GM12878 (cell line): ENCODE measurements at regions of chrX and their contacts with region 1.

Region 1: GRCh38 chrX:109485470-109486340 is 3.8 kb upstream of the GUCY2F start:
- DNase-seq: peak; percentile 34
- ATAC-seq: peak; percentile 84
- H3K4me3 ChIP-seq: no peak overlapping the region
- H3K27ac ChIP-seq: no peak overlapping the region
- H3K4me1 ChIP-seq: no peaks in the 10 kb centered on the region
- H3K27me3 ChIP-seq: no peaks in the 10 kb centered on the region
- CTCF ChIP-seq: peak; percentile 93 to 99 (median 99); a peak in 5 of 6 replicates
- EP300 ChIP-seq: no peak
- POLR2A ChIP-seq: no peak
- RAD21 ChIP-seq: peak; percentile 91

Region 2: GRCh38 chrX:109475174-109475891 is 10.4 kb before region 1 on chrX:
- CTCF ChIA-PET with region 1: interaction called, 28 read pairs
- POLR2A ChIA-PET with region 1: no interaction called
- RAD21 ChIA-PET with region 1: interaction called, 4 read pairs
- SMC1A ChIA-PET with region 1: interaction called, 3 read pairs
- in situ Hi-C with region 1: no loop called
- intact Hi-C with region 1: no loop called
- DNase-seq: no peak
- ATAC-seq: peak; percentile 61
- H3K4me3 ChIP-seq: no peak overlapping the region
- H3K27ac ChIP-seq: no peak overlapping the region
- H3K4me1 ChIP-seq: no peaks in the 10 kb centered on the region
- H3K27me3 ChIP-seq: no peaks in the 10 kb centered on the region; a peak in 1 of 4 replicates
- CTCF ChIP-seq: peak in 2 of 3 experiments; percentile 13 to 19; a peak in 2 of 6 replicates
- EP300 ChIP-seq: no peak
- POLR2A ChIP-seq: no peak
- RAD21 ChIP-seq: 0 out of 2 replicates have a peak, but pooled peaks have one; percentile 22

Region 3: DNA sequence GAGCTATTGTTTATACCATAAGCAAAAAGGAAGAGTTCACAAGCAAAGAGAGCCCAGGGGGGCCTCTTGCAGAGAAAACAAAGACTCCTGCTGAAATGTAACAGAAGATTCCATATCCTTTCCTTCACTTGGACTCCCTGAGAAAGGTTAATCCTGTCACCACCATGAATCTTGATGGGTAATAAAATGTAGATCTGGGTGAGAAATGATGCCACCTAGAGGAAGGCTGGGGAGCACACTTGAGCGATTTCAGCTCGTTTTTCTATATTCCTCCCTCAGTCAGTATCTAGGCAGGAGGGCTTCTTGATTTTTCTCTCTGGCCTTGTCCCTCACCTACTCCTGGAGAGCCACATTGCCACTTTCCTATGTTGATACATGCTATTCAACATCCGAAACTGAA is 149.5 kb after region 1 on chrX:
- CTCF ChIA-PET with region 1: interaction called, 94 read pairs
- POLR2A ChIA-PET with region 1: interaction called, 3 read pairs
- RAD21 ChIA-PET with region 1: interaction called, 6 read pairs
- SMC1A ChIA-PET with region 1: interaction called, 37 read pairs
- in situ Hi-C with region 1: loop called (anchors 5 kb)
- intact Hi-C with region 1: loop called (anchors 1 kb)
- DNase-seq: no peak
- ATAC-seq: peak; percentile 86
- H3K4me3 ChIP-seq: no peak overlapping the region
- H3K27ac ChIP-seq: no peak overlapping the region
- H3K4me1 ChIP-seq: no peaks in the 10 kb centered on the region
- H3K27me3 ChIP-seq: no peaks in the 10 kb centered on the region
- CTCF ChIP-seq: peak; percentile 44 to 69 (median 50); a peak in 4 of 6 replicates
- EP300 ChIP-seq: no peak
- POLR2A ChIP-seq: no peak
- RAD21 ChIP-seq: peak; percentile 26

Region 4: DNA sequence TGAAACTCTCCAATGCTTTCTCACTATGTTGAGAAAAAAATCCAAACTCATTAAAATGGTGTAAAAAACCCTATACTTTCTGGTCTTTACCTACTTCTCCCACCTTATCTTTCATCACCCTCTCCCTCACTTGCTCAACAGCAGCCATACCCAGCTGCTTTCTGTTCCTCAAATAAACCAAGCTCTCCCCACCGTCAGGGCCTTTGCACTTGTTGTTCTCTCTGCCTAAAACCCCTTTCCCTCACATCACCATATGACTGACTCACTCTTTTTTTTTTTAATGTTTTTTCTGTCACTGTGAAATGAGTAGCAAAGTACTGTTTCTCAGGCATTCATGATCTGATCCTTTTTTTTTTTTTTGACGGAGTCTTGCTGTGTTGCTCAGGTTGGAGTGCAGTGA is 394.9 kb after region 1 on chrX:
- CTCF ChIA-PET with region 1: interaction called, 11 read pairs
- POLR2A ChIA-PET with region 1: no interaction called
- RAD21 ChIA-PET with region 1: no interaction called
- SMC1A ChIA-PET with region 1: interaction called, 10 read pairs
- in situ Hi-C with region 1: loop called (anchors 5 kb)
- intact Hi-C with region 1: no loop called
- DNase-seq: peak; percentile 39
- ATAC-seq: peak; percentile 98
- H3K4me3 ChIP-seq: no peak overlapping the region
- H3K27ac ChIP-seq: no peak overlapping the region
- H3K4me1 ChIP-seq: no peaks in the 10 kb centered on the region
- H3K27me3 ChIP-seq: no peaks in the 10 kb centered on the region
- CTCF ChIP-seq: no peak
- EP300 ChIP-seq: peak in 1 of 2 experiments; percentile 28; a peak in 1 of 4 replicates
- POLR2A ChIP-seq: no peak
- RAD21 ChIP-seq: no peak